Activated CD4-positive, alpha-beta memory T cell treated with anti-CD3 and anti-CD28 coated beads for 36 hours (primary cell): ENCODE measurements at regions of chr10 and their contacts with region 1.

Region 1: DNA sequence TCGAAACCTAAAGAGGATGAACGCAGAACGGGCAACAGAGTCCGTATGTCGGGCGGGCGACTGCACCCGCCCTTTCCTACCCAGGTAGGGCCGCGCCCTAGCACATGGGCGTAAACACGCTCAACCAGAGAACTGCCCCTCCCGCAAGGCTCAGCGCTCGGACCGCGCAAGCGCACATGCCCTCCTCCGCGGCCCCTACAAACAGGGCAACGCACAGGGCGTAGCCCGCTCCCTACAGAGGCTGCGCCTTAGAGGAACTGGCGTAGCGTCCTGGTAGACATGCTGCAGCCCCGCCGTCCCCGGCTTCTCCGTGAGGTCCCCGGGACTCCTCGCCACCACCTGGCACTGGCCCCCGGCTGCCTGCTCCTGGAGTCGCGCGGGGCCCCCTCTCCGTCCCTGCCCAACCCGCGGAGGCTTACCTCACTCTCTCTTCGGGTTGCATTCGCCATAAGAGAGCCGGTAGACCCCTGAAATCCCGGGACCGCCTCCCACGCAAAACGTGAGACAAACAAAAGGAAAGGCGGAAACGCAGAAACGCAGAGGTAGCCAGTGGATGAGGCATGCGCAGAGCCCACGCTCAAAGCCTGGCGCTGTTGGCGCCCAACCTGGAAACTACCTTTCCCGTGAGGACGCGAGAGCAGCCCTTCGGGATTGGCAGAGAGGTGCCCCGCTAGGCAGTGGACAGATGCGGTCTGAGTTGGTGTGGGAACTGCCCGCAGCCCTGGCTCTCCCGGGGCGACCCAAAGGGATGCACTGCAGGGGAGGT is at the start of gene ZNF33B:
- DNase-seq: peak; percentile 97
- H3K4me3 Mint-ChIP-seq: peak within 1 kb of the TSS; percentile 94
- H3K27ac Mint-ChIP-seq: peak within 1 kb of the TSS; percentile 98
- H3K4me1 Mint-ChIP-seq: peaks cover 32% of the 10 kb centered on the region
- H3K27me3 Mint-ChIP-seq: no peaks in the 10 kb centered on the region
- total RNA-seq, gene ZNF33B: 6.4 to 7.3 TPM

Region 2: DNA sequence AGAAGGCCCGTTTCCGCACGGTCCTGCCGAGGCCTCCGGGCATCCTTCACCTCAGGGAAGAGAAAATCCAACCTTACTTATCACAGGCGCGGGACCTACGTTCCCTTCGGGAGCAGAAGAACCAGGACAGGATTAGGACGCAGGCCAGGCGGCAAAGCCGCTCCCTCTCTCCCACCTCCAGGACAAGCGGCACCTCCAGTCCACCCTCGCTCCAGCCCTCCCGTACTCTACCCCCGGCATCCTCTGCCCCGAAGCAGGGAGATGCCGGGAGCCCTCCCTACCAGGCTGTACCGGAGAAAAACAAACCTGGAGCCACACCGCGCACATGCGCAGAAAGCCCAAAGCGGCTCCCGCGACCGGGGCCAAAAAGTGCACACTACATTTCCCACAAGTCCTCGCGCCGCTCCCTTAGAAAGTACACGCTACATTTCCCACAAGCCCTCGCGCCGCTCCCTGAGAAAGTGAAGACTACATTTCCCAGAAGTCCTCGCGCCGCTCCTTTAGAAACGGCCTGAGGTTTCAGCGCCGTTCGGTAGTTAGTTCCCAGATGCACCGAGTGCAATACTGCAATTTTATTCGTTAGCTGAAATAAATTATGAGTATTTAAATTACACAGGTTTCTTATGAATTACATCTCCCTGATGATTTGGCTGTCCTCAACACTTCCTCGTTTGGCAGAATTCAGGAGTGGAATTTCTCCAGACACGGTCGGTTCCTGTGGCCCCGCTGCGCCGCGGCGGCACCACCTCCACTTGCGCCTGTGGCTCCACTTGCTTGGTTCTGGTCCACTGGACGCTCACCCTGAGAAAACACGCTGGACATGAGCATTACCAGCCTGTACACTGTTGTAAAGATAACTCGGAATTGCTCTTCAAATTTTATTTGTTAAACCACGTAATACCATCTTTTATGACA is 85.5 kb before region 1 on chr10:
- CTCF ChIA-PET with region 1: no interaction called
- POLR2A ChIA-PET with region 1: no interaction called
- intact Hi-C with region 1: loop called (anchors 1 kb)
- DNase-seq: peak; percentile 97
- H3K4me3 Mint-ChIP-seq: peak overlapping the region; percentile 95
- H3K27ac Mint-ChIP-seq: peak overlapping the region; percentile 87
- H3K4me1 Mint-ChIP-seq: peaks cover 35% of the 10 kb centered on the region
- H3K27me3 Mint-ChIP-seq: no peaks in the 10 kb centered on the region

Region 3: GRCh38 chr10:42801135-42801534 is 162.9 kb after region 1 on chr10:
- CTCF ChIA-PET with region 1: no interaction called
- POLR2A ChIA-PET with region 1: no interaction called
- intact Hi-C with region 1: loop called (anchors 1 kb)
- DNase-seq: peak; percentile 21
- H3K4me3 Mint-ChIP-seq: no peak overlapping the region
- H3K27ac Mint-ChIP-seq: peak overlapping the region; percentile 57
- H3K4me1 Mint-ChIP-seq: peaks cover 25% of the 10 kb centered on the region
- H3K27me3 Mint-ChIP-seq: no peaks in the 10 kb centered on the region

Region 4: DNA sequence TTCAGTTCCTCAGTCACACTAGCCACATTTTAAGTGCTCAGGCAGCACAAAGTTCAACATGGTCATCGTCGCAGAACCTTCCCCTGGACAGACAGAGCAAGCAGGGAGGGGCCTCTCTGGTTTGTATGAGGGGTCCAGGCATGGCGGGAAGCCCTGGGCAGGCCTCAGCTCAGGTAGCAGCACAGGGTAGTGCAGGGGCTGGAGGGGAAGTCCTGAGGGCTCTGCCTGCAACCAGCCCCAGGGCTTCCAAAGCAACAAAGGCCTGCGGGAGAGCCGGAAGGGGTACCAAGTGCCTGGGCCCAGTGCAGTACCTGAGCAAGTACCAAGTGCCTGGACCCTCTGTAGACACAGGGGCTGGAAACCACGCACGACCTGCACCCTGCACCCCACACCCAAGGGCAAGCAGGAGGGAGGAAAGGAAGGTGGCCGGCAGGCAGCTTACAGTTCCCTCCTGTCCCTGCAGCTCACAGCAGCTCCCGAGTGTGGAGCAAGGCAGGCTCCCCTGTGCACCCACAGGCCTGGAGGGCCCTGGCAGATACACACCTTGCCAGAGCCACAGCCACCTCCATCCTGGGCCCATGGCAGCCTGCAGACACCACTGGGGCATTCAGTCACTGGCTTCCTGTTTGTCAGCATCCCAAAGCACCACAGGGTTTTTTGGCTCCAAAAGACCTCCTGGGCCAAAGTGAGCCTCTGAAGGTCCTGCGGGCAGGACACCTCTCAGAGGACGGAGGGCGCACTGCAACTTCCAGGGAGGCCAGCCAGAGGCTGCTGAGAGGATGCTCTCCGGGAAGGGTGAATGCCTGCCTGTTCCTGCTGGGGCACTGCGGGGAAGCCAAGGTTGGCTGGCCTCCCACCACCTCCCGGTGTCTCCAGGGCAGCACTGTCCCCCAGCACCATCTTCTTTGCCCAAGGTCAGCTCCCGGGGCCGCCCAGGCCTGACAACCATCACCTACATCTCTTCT is 432.2 kb after region 1 on chr10:
- CTCF ChIA-PET with region 1: no interaction called
- POLR2A ChIA-PET with region 1: no interaction called
- intact Hi-C with region 1: no loop called
- DNase-seq: no peak
- H3K4me3 Mint-ChIP-seq: no peak overlapping the region
- H3K27ac Mint-ChIP-seq: no peak overlapping the region
- H3K4me1 Mint-ChIP-seq: no peaks in the 10 kb centered on the region
- H3K27me3 Mint-ChIP-seq: peaks cover 3% of the 10 kb centered on the region

Region 5: GRCh38 chr10:43361986-43362839 is 724.0 kb after region 1 on chr10:
- CTCF ChIA-PET with region 1: no interaction called
- POLR2A ChIA-PET with region 1: no interaction called
- intact Hi-C with region 1: loop called (anchors 2 kb)
- DNase-seq: peak; percentile 99
- H3K4me3 Mint-ChIP-seq: peak overlapping the region; percentile 98
- H3K27ac Mint-ChIP-seq: peak overlapping the region; percentile 98
- H3K4me1 Mint-ChIP-seq: peaks cover 20% of the 10 kb centered on the region
- H3K27me3 Mint-ChIP-seq: no peaks in the 10 kb centered on the region

Region 6: GRCh38 chr10:43574001-43574892 is 936.0 kb after region 1 on chr10 and contains the start of gene ZNF239:
- CTCF ChIA-PET with region 1: no interaction called
- POLR2A ChIA-PET with region 1: no interaction called
- intact Hi-C with region 1: loop called (anchors 10 kb)
- DNase-seq: peak; percentile 90
- H3K4me3 Mint-ChIP-seq: peak within 1 kb of the TSS; percentile 70
- H3K27ac Mint-ChIP-seq: peak within 1 kb of the TSS; percentile 65
- H3K4me1 Mint-ChIP-seq: peaks cover 50% of the 10 kb centered on the region
- H3K27me3 Mint-ChIP-seq: no peaks in the 10 kb centered on the region
- total RNA-seq, gene ZNF239: 1.5 to 1.7 TPM